T-cell (primary cell): ENCODE measurements at regions of chr6 and their contacts with region 1.

Region 1: GRCh38 chr6:100998111-100998510 is 117.0 kb upstream of the ASCC3 start:
- DNase-seq: no peak
- ATAC-seq: no peak
- H3K4me3 ChIP-seq: no peak overlapping the region
- H3K4me3 Mint-ChIP-seq: no peak overlapping the region
- H3K27ac ChIP-seq: no peak overlapping the region
- H3K27ac Mint-ChIP-seq: no peak overlapping the region
- H3K4me1 ChIP-seq: no peaks in the 10 kb centered on the region
- H3K4me1 Mint-ChIP-seq: no peaks in the 10 kb centered on the region
- H3K27me3 ChIP-seq: no peaks in the 10 kb centered on the region
- H3K27me3 Mint-ChIP-seq: peaks cover 4 to 8% of the 10 kb centered on the region in 2 donors

Region 2: DNA sequence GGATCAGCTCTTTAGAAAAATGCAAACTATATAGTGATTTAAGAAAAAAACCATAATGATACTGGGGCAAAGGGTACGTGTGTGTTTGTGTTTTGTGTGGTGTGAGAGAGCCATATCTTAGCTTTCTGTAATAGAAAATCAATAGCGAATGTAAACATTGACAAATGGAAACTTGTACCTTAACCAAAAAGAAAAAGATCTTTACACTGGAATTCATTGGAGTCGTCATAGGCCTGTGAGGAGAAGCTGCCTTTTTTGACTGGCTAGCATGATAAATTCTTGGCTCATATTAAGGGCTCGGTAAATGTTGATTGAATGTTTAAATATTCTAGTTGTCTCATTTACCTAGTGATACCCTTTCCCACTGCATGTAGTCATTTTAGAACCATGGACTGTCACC is 44.9 kb after region 1 on chr6:
- CTCF ChIA-PET with region 1: no interaction called
- POLR2A ChIA-PET with region 1: interaction called in 1 of 2 experiments, 16 read pairs
- DNase-seq: no peak
- ATAC-seq: no peak
- H3K4me3 ChIP-seq: no peak overlapping the region
- H3K4me3 Mint-ChIP-seq: no peak overlapping the region
- H3K27ac ChIP-seq: no peak overlapping the region
- H3K27ac Mint-ChIP-seq: no peak overlapping the region
- H3K4me1 ChIP-seq: no peaks in the 10 kb centered on the region
- H3K4me1 Mint-ChIP-seq: no peaks in the 10 kb centered on the region
- H3K27me3 ChIP-seq: no peaks in the 10 kb centered on the region
- H3K27me3 Mint-ChIP-seq: no peaks in the 10 kb centered on the region

Region 3: DNA sequence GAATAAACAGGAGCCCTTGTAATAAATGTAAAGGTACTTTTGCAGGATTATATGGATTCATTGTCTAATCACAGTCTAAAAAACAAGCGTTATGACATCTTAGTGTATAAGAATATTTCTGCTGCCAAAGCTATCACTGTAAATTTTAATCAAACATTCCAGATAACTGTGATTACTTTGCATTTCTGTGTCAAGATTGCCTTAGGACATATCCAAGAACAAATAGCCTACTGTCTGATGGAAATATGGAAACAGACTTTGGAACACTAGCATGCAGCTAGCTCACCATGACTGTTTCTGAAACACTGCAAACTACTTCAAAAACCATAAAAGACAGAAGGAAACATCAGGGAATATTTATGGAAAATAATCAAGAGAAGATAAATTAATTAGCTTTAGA is 131.7 kb after region 1 on chr6:
- CTCF ChIA-PET with region 1: no interaction called
- POLR2A ChIA-PET with region 1: no interaction called
- DNase-seq: no peak
- ATAC-seq: no peak
- H3K4me3 ChIP-seq: no peak overlapping the region
- H3K4me3 Mint-ChIP-seq: no peak overlapping the region
- H3K27ac ChIP-seq: no peak overlapping the region
- H3K27ac Mint-ChIP-seq: no peak overlapping the region
- H3K4me1 ChIP-seq: no peaks in the 10 kb centered on the region
- H3K4me1 Mint-ChIP-seq: no peaks in the 10 kb centered on the region
- H3K27me3 ChIP-seq: no peaks in the 10 kb centered on the region
- H3K27me3 Mint-ChIP-seq: no peaks in the 10 kb centered on the region

Region 4: GRCh38 chr6:101241442-101241841 is 243.3 kb after region 1 on chr6:
- CTCF ChIA-PET with region 1: no interaction called
- POLR2A ChIA-PET with region 1: no interaction called
- DNase-seq: no peak
- ATAC-seq: no peak
- H3K4me3 ChIP-seq: no peak overlapping the region
- H3K4me3 Mint-ChIP-seq: no peak overlapping the region
- H3K27ac ChIP-seq: no peak overlapping the region
- H3K27ac Mint-ChIP-seq: no peak overlapping the region
- H3K4me1 ChIP-seq: no peaks in the 10 kb centered on the region
- H3K4me1 Mint-ChIP-seq: no peaks in the 10 kb centered on the region
- H3K27me3 ChIP-seq: no peaks in the 10 kb centered on the region
- H3K27me3 Mint-ChIP-seq: no peaks in the 10 kb centered on the region